Dorsolateral prefrontal cortex (tissue), 120 donors: ENCODE measurements at regions of chr19 and their contacts with region 1.

Region 1: GRCh38 chr19:53844849-53845246 is 20.7 kb upstream of the NLRP12 start:
- DNase-seq: no peak
- H3K4me3 ChIP-seq: no peak overlapping the region
- H3K27ac ChIP-seq: no peak overlapping the region
- H3K27me3 ChIP-seq: no peaks in the 10 kb centered on the region
- CTCF ChIP-seq: no peak

Region 2: GRCh38 chr19:53824134-53824611 is 20.7 kb before region 1 on chr19 and contains the start of gene NLRP12:
- intact Hi-C with region 1: no loop called
- DNase-seq: no peak
- H3K4me3 ChIP-seq: no peak within 1 kb of the TSS
- H3K27ac ChIP-seq: peak within 1 kb of the TSS in 3 of 59 donors; percentile 15 to 35 (median 29)
- H3K27me3 ChIP-seq: peaks cover 0 to 6% (median 0%) of the 10 kb centered on the region in 45 donors
- CTCF ChIP-seq: no peak
- total RNA-seq, gene NLRP12: 0.10 to 1.3 (median 0.25) TPM in 81 of 120 experiments, not detected in the others

Region 3: DNA sequence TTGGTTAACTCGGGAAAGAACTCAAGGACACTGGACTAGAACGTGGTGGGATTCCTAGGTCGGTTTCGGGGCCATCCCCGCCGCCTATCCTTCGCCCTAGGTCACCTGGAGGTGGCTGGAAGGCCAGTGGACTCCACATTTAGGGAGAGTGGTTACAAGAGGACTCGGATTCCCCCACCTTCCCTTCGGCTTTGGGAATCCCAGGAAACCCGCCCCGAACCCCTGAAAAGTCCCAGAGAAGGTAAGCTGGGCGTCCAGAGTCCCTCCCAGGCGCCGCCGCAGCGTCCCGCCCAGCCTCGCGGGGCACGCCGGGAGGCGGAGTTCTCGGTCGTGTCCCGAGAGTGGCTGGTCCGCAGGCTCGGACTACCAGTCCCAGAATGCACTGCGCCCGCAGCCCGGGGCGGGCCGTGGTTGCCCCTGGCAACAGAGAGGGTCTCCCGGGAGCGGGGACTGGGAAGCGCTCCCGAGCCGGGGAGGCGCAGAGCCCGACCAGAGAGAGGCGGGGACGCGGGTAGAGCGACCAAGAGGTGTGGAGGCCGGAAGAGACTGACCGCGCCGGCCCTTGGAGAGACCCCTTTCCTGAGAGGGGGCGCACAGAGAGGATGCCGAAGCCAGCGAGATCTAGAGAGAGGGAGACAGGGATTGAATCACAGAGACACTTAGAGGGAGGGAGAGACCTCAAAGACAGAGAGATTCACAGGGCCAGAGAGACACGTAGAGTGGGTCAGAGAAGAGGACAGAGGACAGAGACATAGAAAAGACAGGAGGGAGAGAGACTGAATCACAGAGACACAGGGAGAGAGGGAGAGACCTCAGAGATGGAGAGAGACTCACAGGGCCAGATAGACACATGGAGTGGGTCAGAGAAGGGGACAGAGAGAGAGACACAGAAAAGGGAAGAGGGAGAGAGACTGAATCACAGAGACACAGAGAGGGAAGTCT is 34.6 kb after region 1 on chr19:
- intact Hi-C with region 1: loop called in 1 of 2 experiments (anchors 5 kb)
- DNase-seq: peak; percentile 92 to 99 (median 94)
- H3K4me3 ChIP-seq: peak overlapping the region; percentile 32 to 93 (median 70)
- H3K27ac ChIP-seq: peak overlapping the region in 36 of 59 donors; percentile 12 to 76 (median 52)
- H3K27me3 ChIP-seq: peaks cover 0 to 26% (median 6%) of the 10 kb centered on the region in 45 donors
- CTCF ChIP-seq: peak in 45 of 56 donors; percentile 8 to 65 (median 35)

Region 4: DNA sequence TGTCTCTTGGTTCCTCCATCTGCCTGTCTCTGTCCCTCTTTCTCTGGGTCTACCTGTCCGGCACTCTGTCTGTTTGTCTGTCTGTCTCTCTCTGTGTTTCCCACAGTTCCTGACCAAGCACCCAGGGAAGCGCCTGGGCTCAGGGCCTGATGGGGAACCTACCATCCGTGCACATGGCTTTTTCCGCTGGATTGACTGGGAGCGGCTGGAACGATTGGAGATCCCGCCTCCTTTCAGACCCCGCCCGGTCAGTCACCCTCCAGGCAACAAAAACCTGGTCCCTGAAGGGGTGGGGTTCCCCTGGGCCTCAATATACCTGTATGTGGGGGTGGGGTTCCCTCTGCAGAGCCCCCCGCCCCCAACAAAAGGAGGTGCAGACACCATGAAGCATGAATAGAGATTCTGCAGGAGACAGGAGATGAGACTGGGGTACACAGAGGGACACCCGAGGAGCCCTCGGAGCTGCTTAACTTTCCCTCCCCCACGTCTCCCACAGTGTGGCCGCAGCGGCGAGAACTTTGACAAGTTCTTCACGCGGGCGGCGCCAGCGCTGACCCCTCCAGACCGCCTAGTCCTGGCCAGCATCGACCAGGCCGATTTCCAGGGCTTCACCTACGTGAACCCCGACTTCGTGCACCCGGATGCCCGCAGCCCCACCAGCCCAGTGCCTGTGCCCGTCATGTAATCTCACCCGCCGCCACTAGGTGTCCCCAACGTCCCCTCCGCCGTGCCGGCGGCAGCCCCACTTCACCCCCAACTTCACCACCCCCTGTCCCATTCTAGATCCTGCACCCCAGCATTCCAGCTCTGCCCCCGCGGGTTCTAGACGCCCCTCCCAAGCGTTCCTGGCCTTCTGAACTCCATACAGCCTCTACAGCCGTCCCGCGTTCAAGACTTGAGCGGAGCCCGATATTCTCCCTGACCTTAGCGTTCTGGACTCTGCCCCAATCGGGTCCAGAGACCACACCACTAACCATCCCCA is 61.7 kb after region 1 on chr19:
- intact Hi-C with region 1: loop called in 1 of 2 experiments (anchors 5 kb)
- DNase-seq: peak; percentile 53 to 83 (median 70)
- H3K4me3 ChIP-seq: peak overlapping the region in 52 of 59 donors; percentile 1 to 94 (median 78)
- H3K27ac ChIP-seq: peak overlapping the region in 6 of 59 donors; percentile 70 to 89 (median 77)
- H3K27me3 ChIP-seq: peaks cover 0 to 27% (median 0%) of the 10 kb centered on the region in 45 donors
- CTCF ChIP-seq: peak; percentile 42 to 93 (median 84)

Region 5: GRCh38 chr19:54029930-54030490 is 185.2 kb after region 1 on chr19:
- intact Hi-C with region 1: loop called in 1 of 2 experiments (anchors 2 kb)
- DNase-seq: peak; percentile 20 to 81 (median 62)
- H3K4me3 ChIP-seq: no peak overlapping the region
- H3K27ac ChIP-seq: no peak overlapping the region
- H3K27me3 ChIP-seq: peaks cover 0 to 8% (median 0%) of the 10 kb centered on the region in 45 donors
- CTCF ChIP-seq: peak in 54 of 56 donors; percentile 34 to 71 (median 60)